Activated naive CD4-positive, alpha-beta T cell treated with anti-CD3 and anti-CD28 coated beads for 36 hours (primary cell): ENCODE measurements at regions of chr3 and their contacts with region 1.

Region 1: GRCh38 chr3:12193485-12194165 is 34.9 kb upstream of the TIMP4 start:
- DNase-seq: peak; percentile 62
- H3K4me3 Mint-ChIP-seq: no peak overlapping the region
- H3K27ac Mint-ChIP-seq: peak overlapping the region; percentile 84
- H3K4me1 Mint-ChIP-seq: peaks cover 41% of the 10 kb centered on the region
- H3K27me3 Mint-ChIP-seq: peaks cover 3% of the 10 kb centered on the region

Region 2: DNA sequence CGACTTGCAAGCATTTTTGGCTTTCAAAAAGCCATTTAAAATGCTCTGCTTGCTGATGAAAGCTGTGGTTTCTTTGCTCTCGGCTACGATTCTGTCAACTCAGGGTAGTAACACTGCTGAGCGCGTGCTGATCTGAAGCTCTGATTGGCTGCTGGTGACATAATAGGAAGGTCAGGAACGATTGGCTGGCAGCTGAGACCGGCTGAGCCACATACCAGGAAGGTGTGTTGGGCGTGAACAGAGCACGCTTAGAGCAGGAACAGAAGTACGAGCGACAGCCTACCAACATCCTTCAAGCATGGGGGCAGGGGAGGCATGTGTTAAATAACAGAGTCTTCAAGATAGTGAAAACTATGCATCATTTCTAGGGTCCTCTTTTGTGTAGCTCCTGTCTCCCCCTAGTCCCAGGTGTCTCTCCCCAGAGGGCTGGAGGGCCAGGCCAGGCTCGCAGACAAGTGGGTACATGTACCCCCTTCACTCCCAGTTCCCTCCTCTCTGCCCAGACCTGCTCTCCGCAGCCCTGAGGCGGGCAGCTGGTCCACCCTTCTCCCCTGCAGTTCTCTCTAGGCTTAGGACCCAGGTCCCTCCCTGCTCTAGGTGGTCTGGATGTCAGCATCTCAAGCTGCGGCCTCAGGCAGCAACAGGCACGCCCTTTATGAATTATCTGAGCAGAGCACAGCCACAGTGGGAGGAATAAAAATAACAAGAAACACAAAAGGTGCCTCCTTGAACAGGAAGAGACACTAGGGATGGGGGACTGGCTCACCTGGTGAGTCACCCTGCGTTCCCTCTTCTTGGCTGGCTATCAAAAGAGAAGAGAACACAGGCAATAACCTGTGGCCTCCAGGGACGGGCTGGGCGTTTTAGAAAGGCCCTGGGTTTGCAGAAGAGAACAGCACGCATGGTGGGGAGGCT is 422.9 kb before region 1 on chr3:
- CTCF ChIA-PET with region 1: no interaction called
- intact Hi-C with region 1: no loop called
- DNase-seq: peak; percentile 91
- H3K4me3 Mint-ChIP-seq: peak overlapping the region; percentile 10
- H3K27ac Mint-ChIP-seq: peak overlapping the region; percentile 71
- H3K4me1 Mint-ChIP-seq: peaks cover 18% of the 10 kb centered on the region
- H3K27me3 Mint-ChIP-seq: no peaks in the 10 kb centered on the region

Region 3: GRCh38 chr3:11846281-11847034 is 347.2 kb before region 1 on chr3 and contains the start of gene TAMM41:
- CTCF ChIA-PET with region 1: no interaction called
- intact Hi-C with region 1: loop called (anchors 2 kb)
- DNase-seq: peak; percentile 95
- H3K4me3 Mint-ChIP-seq: peak within 1 kb of the TSS; percentile 97
- H3K27ac Mint-ChIP-seq: peak within 1 kb of the TSS; percentile 80
- H3K4me1 Mint-ChIP-seq: peaks cover 26% of the 10 kb centered on the region
- H3K27me3 Mint-ChIP-seq: no peaks in the 10 kb centered on the region
- total RNA-seq, gene TAMM41: 19.3 to 21.4 TPM

Region 4: DNA sequence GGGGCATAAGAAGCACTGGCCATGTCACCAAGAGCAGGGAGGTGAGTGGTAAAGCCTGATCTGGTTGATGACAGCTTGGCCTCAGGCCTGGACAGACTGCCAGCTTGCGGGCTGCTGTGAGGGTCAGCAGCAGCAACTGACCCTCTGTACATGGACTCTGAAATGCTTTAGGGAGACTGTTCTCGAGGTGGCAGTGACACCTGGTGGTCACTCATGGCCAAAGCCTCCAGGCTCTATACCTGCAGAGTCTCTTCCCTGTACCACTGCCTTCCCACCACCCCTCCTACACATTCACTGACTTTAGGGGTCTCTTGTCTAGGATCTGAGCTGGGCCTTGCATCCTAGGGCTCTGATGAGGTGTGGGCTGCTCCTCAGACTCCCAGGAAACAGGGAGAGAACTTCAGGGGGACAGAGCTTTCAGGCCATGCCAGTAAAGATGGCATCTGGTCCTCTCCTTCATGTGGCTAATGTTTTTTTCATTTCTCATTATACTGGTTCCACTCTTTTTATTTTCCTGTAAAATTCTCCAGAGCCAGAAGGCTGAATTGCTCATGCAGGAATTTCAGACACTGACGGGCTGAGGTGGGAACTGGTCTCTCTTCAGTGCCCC is 17.7 kb before region 1 on chr3:
- CTCF ChIA-PET with region 1: interaction called, 5 read pairs
- intact Hi-C with region 1: loop called (anchors 1 kb)
- DNase-seq: peak; percentile 62
- H3K4me3 Mint-ChIP-seq: no peak overlapping the region
- H3K27ac Mint-ChIP-seq: no peak overlapping the region
- H3K4me1 Mint-ChIP-seq: peaks cover 14% of the 10 kb centered on the region
- H3K27me3 Mint-ChIP-seq: peaks cover 1% of the 10 kb centered on the region

Region 5: DNA sequence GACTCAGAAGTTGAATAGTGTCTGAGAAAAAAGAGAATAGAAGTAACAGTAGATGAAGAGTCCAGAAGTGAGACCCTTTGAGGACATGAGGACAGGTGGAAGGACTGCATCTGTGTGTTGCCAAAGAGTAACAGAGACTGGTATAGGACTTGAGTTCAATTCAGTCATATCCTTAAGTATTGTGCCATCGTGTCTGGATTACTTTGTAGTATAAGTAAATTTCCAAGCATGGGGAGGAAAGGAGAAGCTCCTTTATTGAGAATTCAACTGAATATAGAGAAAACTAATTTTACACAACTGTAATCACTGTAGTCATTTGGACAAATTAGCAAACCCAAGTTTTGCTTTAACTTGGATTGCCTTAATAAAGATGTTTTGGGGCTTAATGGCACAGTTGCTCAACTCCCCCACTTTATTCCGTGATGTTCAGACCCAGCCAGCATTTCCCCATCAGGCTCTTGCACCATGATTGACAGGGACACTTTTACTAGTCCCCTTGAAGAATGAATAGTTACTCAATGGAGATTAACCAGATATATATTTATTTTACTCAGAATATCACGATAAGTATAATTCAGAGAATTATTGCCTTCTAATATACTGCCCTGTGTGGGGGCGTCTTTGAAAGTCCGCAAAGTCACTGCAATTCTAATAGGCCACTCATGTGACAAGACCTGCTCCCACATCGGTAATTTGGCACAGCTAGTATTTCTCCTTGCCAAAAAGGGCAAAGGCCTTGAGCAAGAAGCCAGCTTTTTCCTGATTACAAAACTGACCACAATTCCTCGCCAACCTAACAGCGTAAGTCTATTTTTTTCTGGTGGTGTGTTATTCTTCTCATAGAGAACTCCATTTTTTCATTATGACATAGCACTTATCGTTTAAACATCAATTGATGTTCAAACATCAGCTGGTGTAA is 156.5 kb after region 1 on chr3:
- CTCF ChIA-PET with region 1: no interaction called
- intact Hi-C with region 1: loop called (anchors 5 kb)
- DNase-seq: no peak
- H3K4me3 Mint-ChIP-seq: no peak overlapping the region
- H3K27ac Mint-ChIP-seq: no peak overlapping the region
- H3K4me1 Mint-ChIP-seq: peaks cover 10% of the 10 kb centered on the region
- H3K27me3 Mint-ChIP-seq: peaks cover 5% of the 10 kb centered on the region

Region 6: GRCh38 chr3:12395349-12396012 is 201.9 kb after region 1 on chr3:
- CTCF ChIA-PET with region 1: no interaction called
- intact Hi-C with region 1: loop called (anchors 1 kb)
- DNase-seq: peak; percentile 23
- H3K4me3 Mint-ChIP-seq: no peak overlapping the region
- H3K27ac Mint-ChIP-seq: no peak overlapping the region
- H3K4me1 Mint-ChIP-seq: peaks cover 11% of the 10 kb centered on the region
- H3K27me3 Mint-ChIP-seq: peaks cover 27% of the 10 kb centered on the region

Region 7: GRCh38 chr3:12471243-12471651 is 277.6 kb after region 1 on chr3:
- CTCF ChIA-PET with region 1: no interaction called
- intact Hi-C with region 1: loop called (anchors 1 kb)
- DNase-seq: peak; percentile 89
- H3K4me3 Mint-ChIP-seq: no peak overlapping the region
- H3K27ac Mint-ChIP-seq: peak overlapping the region; percentile 71
- H3K4me1 Mint-ChIP-seq: peaks cover 22% of the 10 kb centered on the region
- H3K27me3 Mint-ChIP-seq: no peaks in the 10 kb centered on the region

Region 8: DNA sequence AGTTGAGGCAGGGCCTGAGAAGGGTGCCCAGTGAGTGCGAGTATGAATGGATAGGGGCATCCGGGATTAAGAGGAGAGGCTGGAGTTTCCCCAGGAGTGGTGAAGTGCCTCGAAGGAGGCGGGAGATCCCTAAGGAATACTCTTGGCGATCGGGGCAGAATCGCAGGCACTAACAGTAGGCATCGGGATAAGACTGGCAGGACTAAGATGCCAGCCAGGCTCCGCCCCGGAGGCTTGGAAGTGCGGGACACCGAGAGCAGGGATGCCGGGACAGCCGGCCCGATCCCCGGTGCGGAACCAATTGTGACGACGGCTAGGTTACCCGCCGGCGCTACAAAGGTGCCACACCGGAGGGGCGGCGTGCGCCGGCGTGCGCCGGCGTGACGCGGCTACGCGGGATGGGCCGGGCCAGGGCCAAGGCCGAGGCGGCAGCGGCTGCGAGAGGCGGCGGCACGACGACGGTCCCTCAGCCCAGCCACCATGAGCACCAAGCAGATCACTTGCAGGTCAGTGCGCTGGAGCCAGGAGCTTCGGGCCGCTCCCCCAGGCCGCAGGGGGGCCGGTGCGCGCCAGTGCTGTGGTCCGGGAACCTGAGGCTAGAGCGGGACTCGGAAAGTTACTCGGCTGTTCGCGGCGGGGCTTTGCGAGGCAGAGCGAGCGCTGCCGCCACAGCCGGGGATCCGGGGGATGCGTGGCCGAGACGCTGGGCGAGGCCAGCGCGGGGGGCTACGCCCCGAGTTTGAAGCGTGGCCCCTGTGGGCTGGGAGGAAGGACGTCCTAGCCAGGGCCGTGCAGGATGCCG is 363.2 kb after region 1 on chr3 and contains the start of gene MKRN2:
- CTCF ChIA-PET with region 1: no interaction called
- intact Hi-C with region 1: loop called (anchors 2 kb)
- DNase-seq: peak; percentile 83
- H3K4me3 Mint-ChIP-seq: peak within 1 kb of the TSS; percentile 78
- H3K27ac Mint-ChIP-seq: peak within 1 kb of the TSS; percentile 88
- H3K4me1 Mint-ChIP-seq: peaks cover 48% of the 10 kb centered on the region
- H3K27me3 Mint-ChIP-seq: peaks cover 24% of the 10 kb centered on the region
- total RNA-seq, gene MKRN2: 32.9 to 34.5 TPM

Region 9: DNA sequence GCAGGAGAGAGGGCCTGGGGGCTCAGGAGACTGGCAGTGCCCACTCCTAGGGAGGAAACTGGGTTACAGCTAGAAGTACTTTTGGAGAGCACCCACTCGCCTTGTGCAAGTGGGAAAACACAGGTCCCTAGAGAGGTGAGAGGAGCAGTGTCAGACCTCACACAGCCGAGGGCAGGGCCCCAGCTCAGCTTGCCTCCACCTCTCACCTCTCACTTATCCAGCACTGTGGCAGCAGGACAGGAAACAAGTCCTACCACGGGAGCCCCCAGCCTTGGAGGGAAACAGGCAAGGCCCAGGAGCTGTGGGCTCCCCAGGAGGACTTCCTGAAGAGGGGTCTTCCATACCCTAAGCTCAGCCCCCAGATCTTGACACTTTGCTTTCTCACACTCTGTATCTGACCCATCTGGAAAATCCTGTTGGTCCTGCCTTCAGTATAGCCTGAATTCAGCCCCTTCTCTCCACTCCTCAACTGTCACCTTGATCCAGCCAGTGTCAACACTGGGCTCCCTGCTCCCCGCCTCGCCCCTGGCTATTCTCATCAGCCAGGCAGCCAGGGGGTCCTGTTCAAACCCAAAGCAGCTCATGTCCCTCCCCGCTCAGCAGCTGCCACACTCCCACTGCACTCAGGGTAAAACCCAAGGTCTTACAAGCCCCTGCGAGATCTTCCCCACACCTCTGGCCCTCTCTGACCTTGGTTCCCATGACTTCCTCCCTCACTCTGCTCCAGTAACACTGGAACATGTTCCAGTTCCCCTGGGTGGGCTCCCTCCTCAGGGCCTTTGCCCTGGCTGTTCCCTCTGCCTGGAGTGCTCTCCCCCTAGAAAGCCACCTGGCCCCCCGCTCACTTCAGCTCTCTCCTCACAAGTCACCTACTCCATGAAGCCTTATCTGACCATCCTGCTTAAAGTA is 566.3 kb after region 1 on chr3:
- CTCF ChIA-PET with region 1: no interaction called
- intact Hi-C with region 1: no loop called
- DNase-seq: no peak
- H3K4me3 Mint-ChIP-seq: no peak overlapping the region
- H3K27ac Mint-ChIP-seq: no peak overlapping the region
- H3K4me1 Mint-ChIP-seq: no peaks in the 10 kb centered on the region
- H3K27me3 Mint-ChIP-seq: peaks cover 5% of the 10 kb centered on the region